ENCODE measurements at regions of chr19 and their contacts with region 1.

Region 1: DNA sequence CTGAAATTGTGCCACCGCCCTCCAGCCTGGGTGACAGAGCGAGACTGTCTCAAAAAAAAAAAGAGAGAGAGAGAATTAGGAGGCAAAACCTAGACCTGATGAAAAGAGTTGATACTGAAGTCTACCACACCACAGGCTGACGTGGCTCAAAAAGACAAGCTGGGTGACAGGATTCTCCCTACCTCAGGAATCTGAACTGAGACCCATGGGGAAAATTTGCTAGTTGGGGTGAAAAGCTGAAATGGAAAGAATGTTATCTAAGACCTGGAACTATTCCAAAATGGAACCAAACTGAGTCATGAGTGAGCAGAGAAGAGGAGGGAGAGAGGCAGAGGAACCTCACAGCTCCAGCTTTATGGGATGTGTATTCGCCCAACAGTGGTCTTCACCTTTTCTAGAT is 11.7 kb downstream of the SMG9 start:
- DNase-seq: no peak
- ATAC-seq: no peak
- H3K4me3 ChIP-seq: no peak overlapping the region
- H3K27ac ChIP-seq: no peak overlapping the region
- H3K4me1 ChIP-seq: no peaks in the 10 kb centered on the region; a peak in 1 of 5 replicates
- H3K27me3 ChIP-seq: no peaks in the 10 kb centered on the region
- CTCF ChIP-seq: no peak
- EP300 ChIP-seq: no peak
- POLR2A ChIP-seq: no peak
- RAD21 ChIP-seq: no peak

Region 2: GRCh38 chr19:43687660-43687997 is 55.4 kb before region 1 on chr19:
- CTCF ChIA-PET with region 1: no interaction called
- POLR2A ChIA-PET with region 1: no interaction called
- in situ Hi-C with region 1: no loop called
- intact Hi-C with region 1: no loop called
- DNase-seq: no peak
- ATAC-seq: no peak
- H3K4me3 ChIP-seq: no peak overlapping the region
- H3K27ac ChIP-seq: no peak overlapping the region
- H3K4me1 ChIP-seq: peaks cover 10 to 11% of the 10 kb centered on the region in 2 experiments
- H3K27me3 ChIP-seq: no peaks in the 10 kb centered on the region
- CTCF ChIP-seq: no peak
- EP300 ChIP-seq: no peak
- POLR2A ChIP-seq: no peak
- RAD21 ChIP-seq: no peak

Region 3: DNA sequence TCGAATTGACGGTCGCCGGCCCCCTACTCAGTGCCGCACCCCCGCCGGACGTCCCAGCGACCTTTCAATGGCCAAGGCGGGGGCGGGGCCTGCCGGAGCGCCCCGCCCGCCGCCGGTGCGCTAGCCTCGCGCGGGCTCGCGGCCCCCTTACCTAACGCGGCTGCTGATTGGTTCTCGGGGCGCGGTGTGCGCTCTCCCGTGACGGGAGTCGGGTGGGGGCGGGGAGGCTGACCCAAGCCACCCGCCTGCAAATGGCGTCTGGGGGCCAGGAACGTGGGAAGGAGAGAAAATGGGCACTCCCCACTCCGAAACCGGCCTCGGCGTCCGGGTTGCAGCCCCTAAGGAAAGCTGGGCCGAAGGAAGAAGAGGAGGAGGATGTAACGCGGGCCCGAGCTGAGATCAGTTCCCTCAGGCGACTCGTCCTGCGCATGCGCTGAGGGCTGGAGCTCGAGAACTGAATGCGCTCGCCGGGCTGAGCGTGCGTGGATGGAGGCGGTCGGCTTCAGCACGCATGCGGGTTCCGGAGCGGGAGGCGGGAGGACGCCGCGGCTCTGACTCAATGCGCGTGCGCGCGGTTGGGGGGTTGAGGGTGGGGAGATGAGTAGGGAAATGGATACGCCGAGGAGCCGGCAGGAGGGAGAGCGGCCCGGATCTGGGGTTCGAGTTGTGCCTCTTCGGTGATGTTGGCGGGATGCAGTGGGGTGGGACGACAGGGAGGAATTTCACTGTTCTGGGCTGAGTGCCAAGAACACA is 11.7 kb after region 1 on chr19 and contains the start of gene SMG9:
- CTCF ChIA-PET with region 1: no interaction called
- POLR2A ChIA-PET with region 1: interaction called, 11 read pairs
- in situ Hi-C with region 1: no loop called
- intact Hi-C with region 1: no loop called
- DNase-seq: peak; percentile 97 to 98 (median 97)
- ATAC-seq: peak; percentile 90
- H3K4me3 ChIP-seq: peak within 1 kb of the TSS; percentile 70
- H3K27ac ChIP-seq: peak within 1 kb of the TSS; percentile 100
- H3K4me1 ChIP-seq: peaks cover 40 to 41% of the 10 kb centered on the region in 2 experiments
- H3K27me3 ChIP-seq: no peaks in the 10 kb centered on the region
- CTCF ChIP-seq: no peak
- EP300 ChIP-seq: peak; percentile 19; the same call in 1 of the 2 replicates
- POLR2A ChIP-seq: peak; percentile 98
- RAD21 ChIP-seq: no peak
- polyA plus RNA-seq, gene SMG9: 1.7 to 3.9 TPM

Region 4: DNA sequence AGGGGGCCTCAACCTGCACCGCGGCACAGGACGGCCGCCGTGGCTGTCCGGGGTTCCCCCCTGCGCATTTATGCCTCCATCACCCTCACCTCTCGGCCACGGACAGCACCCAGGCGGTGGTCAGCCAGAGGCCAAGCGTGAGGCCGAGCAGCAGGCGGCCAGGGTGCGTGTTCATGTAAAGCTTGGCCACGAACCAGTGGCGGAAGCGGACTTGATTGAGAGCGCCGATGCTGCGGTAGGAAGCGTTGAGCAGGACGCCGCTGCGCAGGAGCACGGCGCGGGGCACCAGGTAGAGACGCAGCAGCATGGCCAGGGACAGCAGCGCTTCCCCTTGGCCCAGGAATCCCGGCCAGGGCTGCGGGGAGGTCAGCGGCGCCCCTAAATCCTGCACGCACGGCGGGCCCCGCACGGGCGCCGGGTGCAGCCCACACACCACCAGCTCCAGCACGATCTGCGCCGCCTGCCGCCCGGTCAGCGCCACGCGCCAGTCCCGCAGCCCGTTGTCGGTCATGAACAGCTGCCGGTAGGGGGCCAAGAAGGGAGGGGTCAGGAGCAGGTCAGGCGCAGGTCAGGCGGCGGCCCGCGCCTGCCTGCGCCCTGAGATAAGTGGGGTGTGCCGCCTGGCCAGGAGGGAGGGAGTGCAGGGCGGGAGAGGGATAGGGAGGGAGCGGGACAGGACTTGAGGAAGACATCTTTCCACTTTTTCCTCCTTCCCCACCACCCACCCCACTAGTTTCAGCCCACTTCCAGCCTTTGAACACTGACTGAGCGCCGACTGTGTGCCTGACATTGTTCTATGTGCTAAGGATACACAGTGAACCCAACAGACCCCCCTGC is 31.3 kb after region 1 on chr19:
- CTCF ChIA-PET with region 1: interaction called, 14 read pairs
- POLR2A ChIA-PET with region 1: interaction called, 6 read pairs
- in situ Hi-C with region 1: no loop called
- intact Hi-C with region 1: no loop called
- DNase-seq: peak; percentile 96 to 98 (median 97)
- ATAC-seq: peak; percentile 88
- H3K4me3 ChIP-seq: peak overlapping the region; percentile 51
- H3K27ac ChIP-seq: peak overlapping the region; percentile 95
- H3K4me1 ChIP-seq: peaks cover 61 to 63% of the 10 kb centered on the region in 2 experiments
- H3K27me3 ChIP-seq: no peaks in the 10 kb centered on the region
- CTCF ChIP-seq: peak; percentile 86 to 99 (median 99)
- EP300 ChIP-seq: peak; percentile 98
- POLR2A ChIP-seq: peak; percentile 65; the same call in 1 of the 2 replicates
- RAD21 ChIP-seq: peak; percentile 68 to 76

Region 5: GRCh38 chr19:43784981-43785808 is 42.2 kb after region 1 on chr19:
- CTCF ChIA-PET with region 1: interaction called, 58 read pairs
- POLR2A ChIA-PET with region 1: no interaction called
- in situ Hi-C with region 1: loop called (anchors 5 kb)
- intact Hi-C with region 1: loop called (anchors 1 kb)
- DNase-seq: peak; percentile 69 to 90 (median 73)
- ATAC-seq: peak; percentile 82
- H3K4me3 ChIP-seq: no peak overlapping the region
- H3K27ac ChIP-seq: peak overlapping the region; percentile 75
- H3K4me1 ChIP-seq: peaks cover 44 to 50% of the 10 kb centered on the region in 2 experiments
- H3K27me3 ChIP-seq: no peaks in the 10 kb centered on the region
- CTCF ChIP-seq: peak; percentile 97 to 99 (median 98)
- EP300 ChIP-seq: no peak; the same call in 1 of the 2 replicates
- POLR2A ChIP-seq: no peak
- RAD21 ChIP-seq: peak; percentile 95 to 98

Region 6: GRCh38 chr19:43809762-43810696 is 67.0 kb after region 1 on chr19:
- CTCF ChIA-PET with region 1: interaction called, 14 read pairs
- POLR2A ChIA-PET with region 1: interaction called, 5 read pairs
- in situ Hi-C with region 1: no loop called
- intact Hi-C with region 1: loop called (anchors 1 kb)
- DNase-seq: peak; percentile 38 to 71 (median 45)
- ATAC-seq: peak; percentile 85
- H3K4me3 ChIP-seq: no peak overlapping the region
- H3K27ac ChIP-seq: no peak overlapping the region
- H3K4me1 ChIP-seq: no peaks in the 10 kb centered on the region; a peak in 2 of 5 replicates
- H3K27me3 ChIP-seq: no peaks in the 10 kb centered on the region
- CTCF ChIP-seq: peak; percentile 49 to 80 (median 56); a peak in 5 of 6 replicates
- EP300 ChIP-seq: no peak
- POLR2A ChIP-seq: no peak
- RAD21 ChIP-seq: peak; percentile 62 to 85

Measured in K562 (cell line).